ENCODE measurements at regions of chr1 and their contacts with region 1.

Region 1: DNA sequence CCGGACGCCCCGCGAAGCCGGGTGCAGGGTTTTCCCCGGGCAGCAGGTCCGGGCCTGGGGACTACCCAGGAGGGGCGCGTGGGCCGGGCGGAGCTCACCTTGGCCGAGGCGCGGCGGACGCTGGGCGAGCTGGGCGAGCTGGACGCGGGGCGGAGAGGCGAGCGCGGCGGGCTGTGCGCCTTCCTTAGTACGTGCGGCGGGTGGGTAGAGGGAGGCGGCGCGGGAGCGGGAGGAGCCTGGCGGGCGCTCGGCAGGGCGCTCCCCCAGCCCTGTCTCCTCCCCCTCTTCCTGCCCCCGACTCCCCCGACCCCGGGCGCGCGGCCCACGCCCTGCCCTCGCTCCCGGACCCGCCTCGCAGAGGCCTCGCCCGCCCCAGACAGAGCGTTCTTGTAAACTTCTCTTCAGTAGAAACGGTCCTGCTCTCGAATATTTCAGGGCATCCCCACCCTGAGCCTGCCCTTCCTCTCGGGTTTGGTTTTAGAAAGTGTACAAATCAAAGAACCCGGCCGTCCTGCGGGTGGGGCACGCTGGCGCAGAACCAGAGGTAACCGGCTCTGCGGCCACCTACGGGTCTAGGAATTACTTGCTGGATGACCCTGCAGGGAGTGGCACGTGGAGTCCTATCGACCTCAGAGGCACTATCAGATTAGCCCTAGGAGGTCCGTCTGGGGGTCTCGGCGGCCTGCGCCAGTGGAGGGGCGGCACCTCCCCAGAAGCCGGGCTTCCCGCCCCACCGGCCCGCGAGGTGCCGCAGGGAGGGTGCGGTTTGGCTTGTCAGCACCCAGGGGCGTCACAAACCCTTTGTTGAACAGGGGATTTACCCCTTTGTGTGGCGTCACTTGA is at the start of gene S100A10:
- DNase-seq: peak; percentile 95
- H3K4me3 ChIP-seq: peak within 1 kb of the TSS; percentile 54 to 93 (median 89)
- H3K27ac ChIP-seq: peak within 1 kb of the TSS; percentile 97
- H3K4me1 ChIP-seq: peaks cover 66% of the 10 kb centered on the region
- H3K27me3 ChIP-seq: no peaks in the 10 kb centered on the region
- CTCF ChIP-seq: no peak
- total RNA-seq, gene S100A10: 213 to 2,371 TPM

Region 2: DNA sequence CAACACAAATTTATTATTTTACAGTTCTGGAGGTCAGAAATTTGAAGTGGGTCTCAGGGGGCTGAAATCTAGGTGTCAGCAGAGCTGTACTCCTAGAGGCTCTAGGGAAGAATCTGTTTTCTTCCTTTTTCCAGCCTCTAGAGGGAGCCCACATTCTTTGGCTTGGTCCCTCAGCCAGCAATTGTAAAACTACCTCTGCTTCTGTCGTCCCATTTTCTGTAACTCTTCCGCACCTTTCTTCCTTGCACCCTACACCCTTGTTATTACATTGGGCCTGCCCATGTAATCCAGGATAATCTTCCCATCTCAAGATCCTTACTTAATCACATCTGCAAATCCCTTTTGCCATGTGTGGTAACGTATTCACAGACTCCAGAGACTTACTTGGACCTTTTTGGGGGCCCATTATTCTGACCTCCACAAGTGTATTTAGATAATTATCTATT is 59.8 kb before region 1 on chr1:
- CTCF ChIA-PET with region 1: no interaction called
- dilution Hi-C with region 1: no loop called
- in situ Hi-C with region 1: no loop called
- intact Hi-C with region 1: loop called (anchors 1 kb)
- DNase-seq: peak; percentile 57
- H3K4me3 ChIP-seq: no peak overlapping the region
- H3K27ac ChIP-seq: peak overlapping the region; percentile 4
- H3K4me1 ChIP-seq: no peaks in the 10 kb centered on the region
- H3K27me3 ChIP-seq: no peaks in the 10 kb centered on the region
- CTCF ChIP-seq: peak; percentile 85 to 95

Region 3: GRCh38 chr1:151953409-151954094 is 40.3 kb before region 1 on chr1:
- CTCF ChIA-PET with region 1: no interaction called
- dilution Hi-C with region 1: loop called (anchors 5 kb)
- in situ Hi-C with region 1: loop called in 1 of 2 experiments (anchors 10 kb)
- intact Hi-C with region 1: no loop called
- DNase-seq: no peak
- H3K4me3 ChIP-seq: no peak overlapping the region
- H3K27ac ChIP-seq: no peak overlapping the region
- H3K4me1 ChIP-seq: no peaks in the 10 kb centered on the region
- H3K27me3 ChIP-seq: no peaks in the 10 kb centered on the region
- CTCF ChIP-seq: no peak

Region 4: GRCh38 chr1:152029144-152029928 is 35.5 kb after region 1 on chr1:
- CTCF ChIA-PET with region 1: no interaction called
- dilution Hi-C with region 1: loop called (anchors 5 kb)
- in situ Hi-C with region 1: no loop called
- intact Hi-C with region 1: no loop called
- DNase-seq: peak; percentile 77
- H3K4me3 ChIP-seq: no peak overlapping the region
- H3K27ac ChIP-seq: peak overlapping the region; percentile 84
- H3K4me1 ChIP-seq: peaks cover 54% of the 10 kb centered on the region
- H3K27me3 ChIP-seq: no peaks in the 10 kb centered on the region
- CTCF ChIP-seq: no peak

Measured in mammary epithelial cell (primary cell).